PC-3 (cell line): ENCODE measurements at regions of chr12 and their contacts with region 1.

Region 1: GRCh38 chr12:94704452-94705306 is 54.3 kb upstream of the TMCC3 start:
- DNase-seq: peak; percentile 96
- ATAC-seq: peak; percentile 96
- H3K4me3 ChIP-seq: 0 out of 2 replicates have a peak overlapping the region, but pooled peaks have one; percentile 26
- H3K27ac ChIP-seq: peak overlapping the region; percentile 32
- H3K4me1 ChIP-seq: peaks cover 23% of the 10 kb centered on the region
- H3K27me3 ChIP-seq: no peaks in the 10 kb centered on the region
- CTCF ChIP-seq: no peak

Region 2: GRCh38 chr12:94676031-94676641 is 28.5 kb before region 1 on chr12:
- CTCF ChIA-PET with region 1: interaction called, 10 read pairs
- POLR2A ChIA-PET with region 1: no interaction called
- intact Hi-C with region 1: no loop called
- DNase-seq: no peak
- ATAC-seq: no peak
- H3K4me3 ChIP-seq: no peak overlapping the region
- H3K27ac ChIP-seq: no peak overlapping the region
- H3K4me1 ChIP-seq: peaks cover 6% of the 10 kb centered on the region; the same call in 1 of the 2 replicates
- H3K27me3 ChIP-seq: no peaks in the 10 kb centered on the region
- CTCF ChIP-seq: no peak